Activated T-helper 2 cell treated with anti-CD3 and anti-CD28 coated beads, Interferon-gamma antibody, Interleukin-2, Interleukin-4, amounts not matched to agents 10 μg/mL and 5 μg/mL and 100 μg/mL, durations not matched to agents 14 hours and 24 hours and 36 hours (primary cell): ENCODE measurements at regions of chr9 and their contacts with region 1.

Region 1: DNA sequence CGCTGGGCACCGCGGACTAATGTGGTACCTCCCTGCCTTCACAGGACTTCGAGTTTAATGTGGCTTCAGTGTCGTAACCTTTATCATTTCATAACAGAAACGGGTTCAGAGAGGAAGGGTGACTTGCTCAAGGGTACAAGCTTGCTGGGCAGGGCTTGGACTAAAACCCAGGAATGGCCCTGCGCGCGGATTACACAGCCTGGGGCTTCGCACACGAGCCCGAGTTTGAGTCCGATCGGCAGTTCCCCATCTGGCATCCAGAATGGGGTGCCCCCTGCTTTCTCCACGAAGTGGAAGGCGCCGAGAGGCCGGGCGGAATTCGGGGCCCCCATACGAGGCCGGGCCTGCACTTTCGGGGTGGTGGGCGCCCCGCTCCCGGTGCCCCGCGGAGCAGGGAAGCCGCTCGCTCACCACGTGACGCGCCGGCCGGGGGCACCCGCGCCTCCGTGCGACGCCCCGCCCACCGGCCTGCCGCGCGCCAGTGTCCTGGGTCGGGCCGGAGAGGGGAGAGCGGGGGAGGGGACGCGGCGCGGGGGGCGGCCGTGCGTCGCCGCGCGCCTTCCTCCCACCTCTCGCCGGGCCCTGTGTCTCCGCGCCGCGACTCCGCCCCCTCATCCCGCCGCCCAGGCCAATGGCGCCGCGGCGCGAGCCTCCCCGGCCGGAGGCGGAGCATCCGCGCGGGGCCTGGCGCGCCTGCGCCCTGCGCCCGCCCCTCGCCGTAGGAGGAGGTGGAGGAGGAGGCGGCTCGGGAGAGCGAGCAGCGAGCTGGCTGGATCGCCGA is at the start of gene SET:
- DNase-seq: peak; percentile 92
- H3K4me3 Mint-ChIP-seq: peak within 1 kb of the TSS; percentile 82
- H3K27ac Mint-ChIP-seq: peak within 1 kb of the TSS; percentile 91
- H3K4me1 Mint-ChIP-seq: peaks cover 47% of the 10 kb centered on the region
- H3K27me3 Mint-ChIP-seq: no peaks in the 10 kb centered on the region
- total RNA-seq, gene SET: 749 and 756 TPM in 2 replicates

Region 2: DNA sequence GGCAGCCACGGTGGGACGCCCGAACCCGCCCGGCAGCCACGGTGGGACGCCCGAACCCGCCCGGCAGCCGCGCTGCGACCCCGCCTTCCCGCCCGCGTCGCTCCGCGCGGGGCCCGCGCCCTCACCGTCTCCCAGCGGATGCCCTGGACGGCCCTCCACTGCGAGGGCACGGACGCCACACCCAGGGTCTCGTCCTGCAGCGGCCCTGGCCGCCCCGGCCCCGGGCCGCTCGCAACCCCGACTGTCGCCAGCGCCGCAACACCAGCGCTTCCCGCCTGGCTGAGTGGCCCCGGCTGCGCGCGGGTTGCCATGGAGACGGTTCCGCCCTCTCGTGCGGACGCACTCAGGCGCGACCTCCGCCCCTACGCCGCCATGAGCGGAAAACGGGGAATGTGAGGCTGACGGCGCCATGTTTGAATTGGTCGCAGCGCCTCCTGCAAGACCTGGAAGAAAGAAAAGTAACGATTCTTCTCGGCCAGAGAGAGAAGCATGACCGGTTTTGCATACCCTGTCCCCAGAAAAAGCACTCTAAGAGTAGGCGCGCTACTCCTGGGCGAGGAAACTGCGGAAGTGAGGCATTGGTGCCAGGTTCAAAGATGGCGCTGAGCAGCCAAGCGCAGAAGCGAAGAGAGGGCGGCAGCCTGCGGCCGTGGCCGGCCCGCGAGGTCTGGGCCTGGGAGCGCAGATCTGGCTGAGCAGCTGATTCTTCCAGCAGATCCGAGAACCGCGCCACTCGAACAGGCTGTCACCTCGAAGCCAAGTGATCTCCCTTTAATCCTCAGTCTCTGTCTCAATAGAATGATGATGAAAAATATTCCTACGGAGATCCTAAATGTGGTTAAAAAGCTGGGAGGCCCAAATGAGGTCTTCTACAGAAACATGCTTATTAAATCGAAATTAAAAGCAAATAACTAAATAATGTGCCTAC is 32.0 kb before region 1 on chr9 and contains the start of gene DYNC2I2:
- intact Hi-C with region 1: loop called (anchors 2 kb)
- DNase-seq: peak; percentile 94
- H3K4me3 Mint-ChIP-seq: peak within 1 kb of the TSS; percentile 95
- H3K27ac Mint-ChIP-seq: peak within 1 kb of the TSS; percentile 100
- H3K4me1 Mint-ChIP-seq: peaks cover 3% of the 10 kb centered on the region
- H3K27me3 Mint-ChIP-seq: no peaks in the 10 kb centered on the region
- total RNA-seq, gene DYNC2I2: 41.7 and 43.5 TPM in 2 replicates

Region 3: DNA sequence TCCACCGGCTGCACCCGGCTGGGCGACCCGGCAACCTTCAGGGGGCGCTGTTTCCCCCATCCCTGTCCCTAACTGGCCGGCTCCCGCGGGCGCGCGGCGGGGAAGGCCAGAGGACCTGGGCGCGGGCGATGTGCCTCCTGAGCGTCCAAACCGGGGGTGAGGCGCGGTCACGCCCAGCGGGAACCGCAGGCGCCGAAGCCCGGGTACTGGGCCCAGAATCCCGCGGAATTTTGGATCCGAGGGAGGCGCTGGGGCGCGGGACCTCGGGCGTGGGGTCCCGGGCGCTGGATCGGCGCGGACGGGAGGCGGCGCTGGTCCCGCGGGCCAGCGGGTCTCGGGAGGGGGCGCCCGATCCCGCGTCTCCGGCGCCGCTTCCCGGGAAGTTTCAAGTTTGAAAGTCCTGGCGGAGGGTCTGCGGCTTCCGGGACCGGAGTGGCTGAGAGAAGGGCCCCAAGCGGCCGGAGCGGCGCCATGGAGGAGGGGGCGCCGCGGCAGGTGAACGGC is 13.8 kb after region 1 on chr9 and contains the start of gene PKN3:
- intact Hi-C with region 1: loop called (anchors 2 kb)
- DNase-seq: peak; percentile 83
- H3K4me3 Mint-ChIP-seq: peak within 1 kb of the TSS; percentile 89
- H3K27ac Mint-ChIP-seq: peak within 1 kb of the TSS; percentile 78
- H3K4me1 Mint-ChIP-seq: peaks cover 14% of the 10 kb centered on the region
- H3K27me3 Mint-ChIP-seq: no peaks in the 10 kb centered on the region
- total RNA-seq, gene PKN3: 25.4 and 28.0 TPM in 2 replicates

Region 4: DNA sequence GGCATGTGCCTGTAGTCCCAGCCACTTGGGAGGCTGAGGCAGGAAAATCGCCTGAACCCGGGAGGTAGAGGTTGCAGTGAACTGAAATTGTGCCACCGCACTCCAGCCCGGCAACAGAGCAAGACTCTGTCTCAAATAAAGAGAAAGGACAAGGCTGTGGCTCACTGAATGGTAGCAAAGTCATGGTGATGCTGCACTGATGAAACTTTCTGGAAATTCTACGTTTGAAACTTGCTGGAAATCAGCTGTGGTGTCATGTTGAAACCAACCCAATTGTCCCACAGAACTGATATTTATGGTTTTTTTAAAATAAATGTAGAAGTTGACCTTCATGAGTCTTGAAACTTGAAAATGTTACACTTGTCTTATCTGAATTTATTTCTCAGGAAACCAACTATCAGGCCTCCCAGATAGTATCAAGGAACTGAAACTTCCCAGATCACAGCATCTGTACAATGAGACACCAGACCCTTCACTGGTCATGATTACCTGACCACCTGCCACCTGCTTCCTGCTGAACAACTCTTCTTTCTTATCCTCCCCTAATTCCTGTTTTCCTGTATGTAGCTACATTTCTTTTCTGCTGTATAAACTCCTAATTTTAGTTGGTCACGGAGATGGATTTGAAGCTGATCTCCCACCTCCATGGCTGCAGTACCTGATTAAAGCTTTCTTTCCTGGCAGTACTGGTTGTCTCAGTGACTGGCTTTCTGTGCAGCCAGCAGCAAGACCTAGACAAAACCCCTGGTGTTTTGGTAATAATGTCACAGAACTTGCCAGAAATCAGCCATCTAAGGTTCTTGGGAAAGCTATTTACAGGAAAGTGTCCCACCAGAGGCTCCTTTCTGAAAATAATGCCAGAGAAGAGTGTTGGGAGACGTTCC is 92.7 kb after region 1 on chr9:
- intact Hi-C with region 1: no loop called
- DNase-seq: no peak
- H3K4me3 Mint-ChIP-seq: no peak overlapping the region
- H3K27ac Mint-ChIP-seq: peak overlapping the region; percentile 7
- H3K4me1 Mint-ChIP-seq: peaks cover 12% of the 10 kb centered on the region
- H3K27me3 Mint-ChIP-seq: no peaks in the 10 kb centered on the region

Region 5: GRCh38 chr9:128947422-128948301 is 259.0 kb after region 1 on chr9 and contains the starts of genes DOLK and NUP188:
- intact Hi-C with region 1: loop called (anchors 2 kb)
- DNase-seq: peak; percentile 99
- H3K4me3 Mint-ChIP-seq: peak within 1 kb of the TSS; percentile 98
- H3K27ac Mint-ChIP-seq: peak within 1 kb of the TSS; percentile 98
- H3K4me1 Mint-ChIP-seq: peaks cover 18% of the 10 kb centered on the region
- H3K27me3 Mint-ChIP-seq: no peaks in the 10 kb centered on the region
- total RNA-seq, gene DOLK: 13.0 and 13.3 TPM in 2 replicates
- total RNA-seq, gene NUP188: 161 and 175 TPM in 2 replicates

Region 6: GRCh38 chr9:129028192-129028957 is 339.7 kb after region 1 on chr9 and contains the start of gene SH3GLB2:
- intact Hi-C with region 1: loop called (anchors 10 kb)
- DNase-seq: peak; percentile 87
- H3K4me3 Mint-ChIP-seq: peak within 1 kb of the TSS; percentile 90
- H3K27ac Mint-ChIP-seq: peak within 1 kb of the TSS; percentile 70
- H3K4me1 Mint-ChIP-seq: peaks cover 3% of the 10 kb centered on the region
- H3K27me3 Mint-ChIP-seq: no peaks in the 10 kb centered on the region
- total RNA-seq, gene SH3GLB2: 71.5 and 73.4 TPM in 2 replicates